GM13976 (cell line): ENCODE measurements at regions of chr20 and their contacts with region 1.

Region 1: GRCh38 chr20:11544029-11544678 is 373.5 kb upstream of the BTBD3 start:
- DNase-seq: peak; percentile 56
- CTCF ChIP-seq: peak; percentile 40

Region 2: GRCh38 chr20:10553326-10553984 is 990.7 kb before region 1 on chr20:
- in situ Hi-C with region 1: loop called (anchors 25 kb)
- DNase-seq: peak; percentile 28
- CTCF ChIP-seq: peak; percentile 73

Region 3: GRCh38 chr20:10674712-10675449 is 869.3 kb before region 1 on chr20:
- in situ Hi-C with region 1: loop called (anchors 25 kb)
- DNase-seq: peak; percentile 86
- CTCF ChIP-seq: peak; percentile 80